ENCODE measurements at regions of chr2 and their contacts with region 1.

Region 1: DNA sequence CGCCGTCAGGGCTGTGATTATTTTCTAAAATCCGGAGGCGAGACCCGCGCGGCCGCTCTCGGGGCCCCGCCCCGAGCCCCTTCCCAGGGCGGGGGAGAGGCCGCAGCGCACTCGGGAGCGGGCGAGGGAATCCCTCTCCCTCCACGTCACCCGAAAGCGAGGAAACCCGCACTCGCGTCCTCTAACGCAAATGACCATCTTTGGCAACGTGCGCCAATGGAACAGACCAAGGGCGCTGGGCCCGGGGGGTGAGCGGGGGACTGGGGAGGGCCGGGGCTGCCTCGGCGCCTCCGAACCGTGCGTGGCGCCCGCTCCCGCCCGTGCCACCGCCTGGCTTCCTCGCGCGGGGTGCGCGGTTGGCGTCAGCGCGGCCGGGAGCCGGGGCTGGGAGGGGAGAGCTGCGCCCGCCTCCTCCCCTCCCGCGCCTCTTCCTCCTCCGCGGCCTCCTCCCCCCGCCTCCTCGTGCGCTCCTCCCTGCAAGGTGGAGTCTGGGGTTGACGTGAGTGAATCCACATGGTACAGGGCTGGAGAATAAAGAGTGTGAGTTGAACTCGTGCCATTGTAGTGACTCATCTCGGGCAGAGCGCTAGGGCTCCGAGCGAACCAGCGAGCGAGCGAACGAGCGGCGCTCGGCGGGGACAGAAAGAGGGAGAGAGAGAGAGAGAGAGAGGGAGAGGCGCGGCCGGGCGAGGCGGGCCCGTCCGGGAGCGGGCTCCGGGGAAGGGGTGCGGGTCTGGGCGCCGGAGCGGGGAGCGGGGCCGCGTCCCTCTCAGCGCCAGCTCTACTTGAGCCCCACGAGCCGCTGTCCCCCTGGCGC is at the start of gene FOSL2:
- DNase-seq: peak; percentile 98
- H3K4me3 Mint-ChIP-seq: no peak within 1 kb of the TSS
- H3K27ac Mint-ChIP-seq: peak within 1 kb of the TSS; percentile 99
- H3K4me1 Mint-ChIP-seq: peaks cover 38% of the 10 kb centered on the region
- H3K27me3 Mint-ChIP-seq: peaks cover 2% of the 10 kb centered on the region
- total RNA-seq, gene FOSL2: 73.2 and 80.6 TPM in 2 replicates

Region 2: GRCh38 chr2:27628767-27629709 is 763.5 kb before region 1 on chr2 and contains the starts of genes CCDC121 and GPN1:
- intact Hi-C with region 1: loop called (anchors 2 kb)
- DNase-seq: peak; percentile 98
- H3K4me3 Mint-ChIP-seq: no peak within 1 kb of the TSS
- H3K27ac Mint-ChIP-seq: no peak within 1 kb of the TSS
- H3K4me1 Mint-ChIP-seq: peaks cover 25% of the 10 kb centered on the region
- H3K27me3 Mint-ChIP-seq: no peaks in the 10 kb centered on the region
- total RNA-seq, gene CCDC121: 0.54 and 0.63 TPM in 2 replicates
- total RNA-seq, gene GPN1: 51.0 and 55.4 TPM in 2 replicates

Region 3: DNA sequence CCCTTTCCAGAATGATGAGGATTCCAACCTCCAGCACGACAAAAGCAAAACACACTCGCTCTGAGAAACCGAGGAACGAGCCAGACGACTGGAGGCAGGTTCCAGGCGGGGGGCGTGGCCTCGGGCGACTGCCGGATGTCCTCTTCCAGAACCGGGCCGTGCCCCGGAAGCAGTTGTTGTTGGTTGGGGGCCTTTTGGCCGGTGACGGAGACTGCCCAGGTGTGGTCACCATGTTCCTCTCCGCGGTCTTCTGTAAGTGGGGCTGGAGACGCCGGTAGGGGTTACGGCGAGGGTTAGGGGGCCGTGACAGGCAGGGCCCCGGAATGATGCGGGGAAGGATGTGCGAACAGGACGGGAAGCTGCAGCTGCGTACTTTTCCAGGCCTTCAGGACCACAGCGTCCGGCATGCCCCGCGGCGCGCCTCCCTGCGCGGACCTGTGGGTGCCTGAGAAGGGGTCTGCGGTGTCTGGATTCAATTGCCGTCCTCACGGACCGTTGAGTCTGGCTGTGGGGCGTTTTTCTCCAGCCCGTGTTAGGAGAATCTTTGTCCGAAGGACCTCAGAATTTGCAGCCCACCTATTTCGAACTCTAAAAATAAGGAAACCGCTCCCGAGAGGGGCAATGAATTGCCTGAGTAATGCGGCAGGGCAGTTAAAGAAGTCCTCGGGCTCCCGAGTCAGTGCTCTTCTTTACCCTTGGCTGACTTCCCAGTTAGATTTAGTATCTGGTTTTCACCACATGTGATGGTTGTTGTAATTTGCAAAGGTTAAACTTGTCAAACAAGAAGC is 620.8 kb before region 1 on chr2 and contains the start of gene MRPL33:
- intact Hi-C with region 1: loop called (anchors 5 kb)
- DNase-seq: peak; percentile 97
- H3K4me3 Mint-ChIP-seq: peak within 1 kb of the TSS; percentile 98
- H3K27ac Mint-ChIP-seq: peak within 1 kb of the TSS; percentile 97
- H3K4me1 Mint-ChIP-seq: peaks cover 23% of the 10 kb centered on the region
- H3K27me3 Mint-ChIP-seq: no peaks in the 10 kb centered on the region
- total RNA-seq, gene MRPL33: 59.0 and 59.6 TPM in 2 replicates

Region 4: DNA sequence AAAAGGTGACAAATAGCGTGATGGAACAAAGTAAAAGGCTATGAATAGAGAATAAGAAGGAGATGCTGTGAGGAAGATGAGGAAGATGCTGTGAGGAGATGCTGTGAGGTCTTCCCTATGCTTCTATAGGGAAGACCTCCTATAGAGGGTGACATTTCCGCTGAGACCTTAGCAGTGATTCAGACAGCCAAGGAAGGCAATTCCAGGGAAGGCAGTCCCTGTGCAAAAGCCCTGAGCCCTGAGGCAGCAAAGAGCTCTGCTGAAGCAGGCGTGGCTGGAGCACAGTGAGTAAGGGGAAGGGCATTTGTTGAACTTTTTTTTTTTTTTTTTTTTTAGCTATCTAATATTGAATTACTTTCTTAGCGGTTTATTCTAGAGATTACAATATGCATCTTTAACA is 142.5 kb before region 1 on chr2:
- intact Hi-C with region 1: loop called (anchors 2 kb)
- DNase-seq: no peak
- H3K4me3 Mint-ChIP-seq: no peak overlapping the region
- H3K27ac Mint-ChIP-seq: no peak overlapping the region
- H3K4me1 Mint-ChIP-seq: peaks cover 43% of the 10 kb centered on the region
- H3K27me3 Mint-ChIP-seq: no peaks in the 10 kb centered on the region

Region 5: GRCh38 chr2:28366496-28367282 is 25.8 kb before region 1 on chr2:
- intact Hi-C with region 1: loop called (anchors 1 kb)
- DNase-seq: peak; percentile 90
- H3K4me3 Mint-ChIP-seq: peak overlapping the region; percentile 78
- H3K27ac Mint-ChIP-seq: peak overlapping the region; percentile 90
- H3K4me1 Mint-ChIP-seq: peaks cover 52% of the 10 kb centered on the region
- H3K27me3 Mint-ChIP-seq: peaks cover 14% of the 10 kb centered on the region

Region 6: DNA sequence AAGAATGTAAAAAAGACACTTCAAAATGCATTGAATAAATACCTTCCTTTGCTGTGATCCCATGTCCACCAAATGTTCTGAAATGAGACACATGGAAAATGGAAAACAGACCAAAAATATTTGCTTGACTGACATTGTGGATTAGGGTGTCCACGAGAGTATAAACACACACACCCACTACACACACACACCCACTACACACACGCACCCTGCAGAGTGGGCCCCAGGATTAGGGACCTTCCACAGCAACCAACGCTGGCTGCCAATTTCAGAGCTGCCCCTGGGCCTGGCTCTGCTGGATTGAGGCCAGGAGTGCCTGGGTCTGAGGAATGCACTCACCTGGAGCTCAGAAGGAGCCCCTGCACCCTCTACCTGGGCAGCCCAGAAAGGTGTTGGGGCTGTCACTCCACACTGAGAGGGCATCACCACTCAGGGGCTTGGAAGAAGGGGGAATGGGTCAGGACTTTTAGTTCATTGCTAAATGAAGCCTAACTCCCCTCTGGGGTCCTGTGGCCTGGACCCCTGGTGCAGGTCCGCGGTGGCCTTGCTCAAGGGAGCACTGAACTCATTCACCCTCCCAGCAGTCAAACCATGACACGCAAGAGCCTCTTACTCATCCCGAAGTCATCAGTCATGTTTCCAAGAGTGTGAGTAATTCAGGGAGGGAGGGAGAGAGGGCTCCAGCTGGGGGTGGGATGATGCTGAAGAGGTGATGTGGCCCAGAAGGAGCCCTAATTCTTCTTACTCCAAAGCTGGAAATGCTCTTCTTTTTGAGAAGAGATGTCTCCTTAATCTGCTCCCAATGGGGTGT is 53.1 kb after region 1 on chr2:
- intact Hi-C with region 1: loop called (anchors 1 kb)
- DNase-seq: no peak
- H3K4me3 Mint-ChIP-seq: peak overlapping the region; percentile 47
- H3K27ac Mint-ChIP-seq: peak overlapping the region; percentile 85
- H3K4me1 Mint-ChIP-seq: peaks cover 64% of the 10 kb centered on the region
- H3K27me3 Mint-ChIP-seq: no peaks in the 10 kb centered on the region

Region 7: DNA sequence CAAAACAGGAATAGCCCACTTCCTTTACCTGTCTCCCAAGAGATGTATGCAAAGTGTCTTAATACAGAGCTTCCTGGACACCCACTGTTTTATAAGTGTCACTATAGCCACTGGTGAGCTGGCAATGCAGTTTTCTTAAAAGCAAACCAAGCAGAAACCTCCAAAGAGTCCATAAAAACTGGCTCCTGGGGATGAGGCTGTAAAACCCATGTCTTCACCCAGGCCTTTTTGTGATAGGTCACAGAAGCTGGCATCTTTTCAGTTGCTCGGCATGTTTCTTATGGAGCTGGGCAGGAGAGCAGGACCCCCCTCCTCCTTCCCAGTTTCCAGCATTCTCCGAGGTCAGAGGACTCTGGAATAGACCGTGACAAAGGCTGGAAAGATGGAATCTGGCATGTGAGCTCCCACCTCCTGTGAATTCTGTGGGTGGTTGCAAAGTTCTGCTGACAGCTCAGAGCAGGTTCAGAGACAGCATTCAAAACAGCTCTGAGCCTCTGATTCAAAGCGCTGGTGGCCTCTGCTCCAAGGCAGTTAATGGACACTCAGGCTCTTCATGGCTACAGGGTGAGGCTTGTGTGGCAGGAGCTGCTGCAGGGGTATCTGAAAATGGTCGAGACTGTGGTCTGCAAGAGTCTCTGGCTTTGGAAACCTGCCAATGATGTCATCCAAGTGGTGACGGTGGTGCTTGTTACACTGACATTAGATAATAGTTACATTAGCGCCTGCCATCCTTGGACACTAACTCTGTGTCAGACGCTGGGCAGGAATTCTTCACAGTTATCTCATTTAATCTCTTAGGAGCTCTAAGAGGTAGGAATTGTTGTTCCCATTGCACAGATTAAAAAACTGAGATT is 1006.1 kb after region 1 on chr2:
- intact Hi-C with region 1: no loop called
- DNase-seq: no peak
- H3K4me3 Mint-ChIP-seq: no peak overlapping the region
- H3K27ac Mint-ChIP-seq: no peak overlapping the region
- H3K4me1 Mint-ChIP-seq: no peaks in the 10 kb centered on the region
- H3K27me3 Mint-ChIP-seq: peaks cover 6% of the 10 kb centered on the region